Ascending aorta (tissue), 2 donors: ENCODE measurements at regions of chr9 and their contacts with region 1.

Region 1: GRCh38 chr9:114906908-114907571 is 23.4 kb downstream of the TNFSF8 start:
- DNase-seq: no peak
- H3K4me3 ChIP-seq: no peak overlapping the region
- H3K27ac ChIP-seq: no peak overlapping the region
- H3K4me1 ChIP-seq: no peaks in the 10 kb centered on the region
- H3K27me3 ChIP-seq: no peaks in the 10 kb centered on the region
- CTCF ChIP-seq: peak in 2 of 3 experiments; percentile 13 to 28

Region 2: DNA sequence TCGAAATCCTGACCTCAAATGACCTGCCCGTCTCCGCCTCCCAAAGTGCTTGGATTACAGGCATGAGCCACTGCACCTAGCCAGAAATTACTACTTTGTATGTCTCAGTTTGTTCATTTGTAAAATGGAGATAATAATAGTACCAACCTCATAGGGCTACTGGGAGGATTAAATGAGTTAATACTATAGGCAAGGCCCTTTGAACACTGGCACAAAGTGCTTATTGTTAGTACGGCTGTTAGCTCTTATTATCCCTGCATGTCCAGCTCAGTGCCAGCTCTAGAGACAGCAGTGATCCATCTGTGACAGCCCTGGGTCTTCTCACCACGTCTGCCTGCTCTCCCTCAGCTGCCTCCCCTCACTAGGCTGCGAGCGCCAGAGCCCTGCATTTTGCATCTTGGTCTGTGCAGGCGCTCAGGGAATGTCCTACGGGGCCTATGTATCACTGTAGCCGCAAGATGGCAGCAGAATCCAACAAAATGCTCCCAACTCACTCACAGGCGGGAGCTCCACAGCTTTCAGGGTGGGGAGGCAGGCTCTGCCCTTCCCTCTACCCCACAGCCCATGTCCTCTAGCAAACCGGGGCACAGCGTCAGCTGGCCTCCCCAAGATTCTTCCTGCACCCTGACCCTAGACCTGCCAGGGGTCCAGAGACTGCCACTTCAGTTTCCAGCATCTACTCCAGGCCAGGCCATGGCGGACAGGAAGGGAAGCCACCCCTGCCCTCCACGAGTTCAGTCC is 501.6 kb before region 1 on chr9:
- intact Hi-C with region 1: loop called (anchors 5 kb)
- DNase-seq: peak in 1 of 2 donors; percentile 89
- H3K4me3 ChIP-seq: no peak overlapping the region
- H3K27ac ChIP-seq: no peak overlapping the region
- H3K4me1 ChIP-seq: no peaks in the 10 kb centered on the region
- H3K27me3 ChIP-seq: no peaks in the 10 kb centered on the region
- CTCF ChIP-seq: peak; percentile 78 to 87 (median 87)

Region 3: GRCh38 chr9:114662081-114662989 is 244.7 kb before region 1 on chr9:
- intact Hi-C with region 1: loop called (anchors 10 kb)
- DNase-seq: no peak
- H3K4me3 ChIP-seq: no peak overlapping the region
- H3K27ac ChIP-seq: no peak overlapping the region
- H3K4me1 ChIP-seq: no peaks in the 10 kb centered on the region
- H3K27me3 ChIP-seq: no peaks in the 10 kb centered on the region
- CTCF ChIP-seq: peak; percentile 64 to 73 (median 67)

Region 4: DNA sequence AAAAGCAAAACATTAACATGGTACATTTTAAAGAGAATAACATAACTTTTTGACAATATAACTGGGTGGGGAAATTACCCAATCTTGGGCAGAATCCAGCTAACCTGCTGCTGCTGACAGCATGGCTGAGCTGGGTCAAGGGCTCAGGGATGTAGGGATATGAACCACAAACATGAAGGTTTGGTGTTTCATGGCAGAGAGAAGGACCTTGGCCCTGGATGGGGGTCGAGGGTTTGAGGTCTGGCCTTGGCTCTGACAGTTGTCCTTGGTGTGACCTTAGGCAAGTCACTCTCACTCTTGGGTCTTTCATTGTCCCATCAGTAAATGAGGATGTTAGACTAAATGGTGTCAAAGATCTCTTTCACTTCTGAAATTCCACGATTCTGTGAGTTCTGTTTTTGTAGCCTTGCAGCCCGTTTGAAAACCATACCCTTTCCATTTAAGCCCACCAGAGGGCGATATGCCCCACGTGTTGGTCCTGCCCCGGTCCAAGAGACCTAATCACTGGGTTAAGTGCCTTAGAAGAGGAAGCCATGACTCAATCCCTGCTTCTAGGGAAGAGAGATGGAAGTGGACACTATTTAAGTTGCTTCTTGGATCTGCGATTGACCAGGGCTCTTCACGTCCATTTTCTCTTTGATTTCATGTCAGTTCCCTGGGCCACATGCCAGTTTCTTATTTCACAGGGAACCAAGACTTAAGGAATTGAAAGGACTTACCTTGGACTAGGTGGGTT is 168.3 kb before region 1 on chr9:
- intact Hi-C with region 1: loop called (anchors 1 kb)
- DNase-seq: peak in 1 of 2 donors; percentile 86
- H3K4me3 ChIP-seq: no peak overlapping the region
- H3K27ac ChIP-seq: no peak overlapping the region
- H3K4me1 ChIP-seq: no peaks in the 10 kb centered on the region
- H3K27me3 ChIP-seq: no peaks in the 10 kb centered on the region
- CTCF ChIP-seq: peak; percentile 70 to 76 (median 70)